ENCODE measurements at regions of chr14 and their contacts with region 1.

Region 1: GRCh38 chr14:36451301-36452065 is 68.5 kb downstream of the NKX2-1 start:
- DNase-seq: no peak
- H3K4me3 ChIP-seq: no peak overlapping the region
- H3K4me3 Mint-ChIP-seq: no peak overlapping the region
- H3K27ac Mint-ChIP-seq: no peak overlapping the region
- H3K4me1 ChIP-seq: peaks cover 3% of the 10 kb centered on the region; the same call in 1 of the 2 replicates
- H3K4me1 Mint-ChIP-seq: peaks cover 6% of the 10 kb centered on the region
- H3K27me3 ChIP-seq: no peaks in the 10 kb centered on the region
- H3K27me3 Mint-ChIP-seq: no peaks in the 10 kb centered on the region
- CTCF ChIP-seq: no peak

Region 2: DNA sequence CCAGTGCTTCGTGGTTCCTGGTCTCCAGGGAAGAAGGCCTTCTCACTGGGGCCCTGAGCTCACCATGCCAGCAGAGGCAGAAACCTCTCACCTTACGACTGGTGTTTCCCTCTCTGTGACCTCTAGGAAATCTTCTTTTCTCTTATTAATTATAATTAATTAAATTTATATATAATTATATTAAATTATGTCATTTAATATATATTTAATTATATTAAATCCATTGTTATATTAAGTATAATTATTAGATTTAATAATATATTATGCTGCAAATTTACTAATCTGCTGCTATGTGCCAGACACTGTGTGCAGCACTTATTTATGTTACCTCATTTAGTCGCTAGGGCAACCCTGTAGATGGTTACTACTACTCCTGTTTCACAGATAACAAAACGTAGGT is 60.8 kb before region 1 on chr14:
- CTCF ChIA-PET with region 1: no interaction called
- POLR2A ChIA-PET with region 1: interaction called, 11 read pairs
- intact Hi-C with region 1: no loop called
- DNase-seq: no peak
- H3K4me3 ChIP-seq: no peak overlapping the region
- H3K4me3 Mint-ChIP-seq: no peak overlapping the region
- H3K27ac Mint-ChIP-seq: no peak overlapping the region
- H3K4me1 ChIP-seq: no peaks in the 10 kb centered on the region
- H3K4me1 Mint-ChIP-seq: peaks cover 7% of the 10 kb centered on the region
- H3K27me3 ChIP-seq: no peaks in the 10 kb centered on the region
- H3K27me3 Mint-ChIP-seq: no peaks in the 10 kb centered on the region
- CTCF ChIP-seq: no peak

Region 3: DNA sequence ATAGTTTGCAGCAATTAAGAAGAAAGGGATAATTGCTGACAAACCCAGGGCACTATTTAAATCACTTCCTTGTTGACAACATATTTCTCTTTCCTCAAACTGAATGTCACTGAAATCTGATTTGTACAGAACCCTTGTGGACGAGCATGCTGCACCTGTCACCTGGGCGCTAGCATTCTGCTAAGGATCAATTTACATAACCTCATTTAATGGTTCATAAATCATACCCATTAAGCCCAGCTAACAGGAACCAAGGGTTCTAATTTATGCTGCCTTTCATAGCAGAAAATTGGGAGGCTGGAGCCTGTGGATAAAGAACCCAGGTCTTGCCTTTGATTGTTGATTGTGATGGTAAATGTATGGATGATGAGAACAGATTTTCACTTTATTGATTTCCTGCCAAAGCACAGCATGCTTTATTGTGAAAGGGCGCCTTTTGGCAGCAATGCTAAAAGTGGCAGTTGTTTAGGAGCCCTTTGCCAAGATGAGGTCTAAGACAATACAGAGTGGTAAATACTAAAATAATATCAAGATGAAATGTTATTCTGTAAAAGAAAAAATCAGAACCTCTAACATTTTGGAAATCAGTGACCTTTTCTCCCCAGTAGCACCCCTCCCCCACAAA is 26.9 kb before region 1 on chr14:
- CTCF ChIA-PET with region 1: no interaction called
- POLR2A ChIA-PET with region 1: no interaction called
- intact Hi-C with region 1: no loop called
- DNase-seq: no peak
- H3K4me3 ChIP-seq: no peak overlapping the region
- H3K4me3 Mint-ChIP-seq: no peak overlapping the region
- H3K27ac Mint-ChIP-seq: no peak overlapping the region
- H3K4me1 ChIP-seq: no peaks in the 10 kb centered on the region
- H3K4me1 Mint-ChIP-seq: peaks cover 9% of the 10 kb centered on the region
- H3K27me3 ChIP-seq: no peaks in the 10 kb centered on the region
- H3K27me3 Mint-ChIP-seq: no peaks in the 10 kb centered on the region
- CTCF ChIP-seq: no peak

Region 4: GRCh38 chr14:36510078-36510799 is 58.8 kb after region 1 on chr14:
- CTCF ChIA-PET with region 1: no interaction called
- POLR2A ChIA-PET with region 1: no interaction called
- intact Hi-C with region 1: loop called (anchors 5 kb)
- DNase-seq: no peak
- H3K4me3 ChIP-seq: no peak overlapping the region
- H3K4me3 Mint-ChIP-seq: no peak overlapping the region
- H3K27ac Mint-ChIP-seq: no peak overlapping the region
- H3K4me1 ChIP-seq: peaks cover 13% of the 10 kb centered on the region
- H3K4me1 Mint-ChIP-seq: no peaks in the 10 kb centered on the region
- H3K27me3 ChIP-seq: no peaks in the 10 kb centered on the region
- H3K27me3 Mint-ChIP-seq: peaks cover 11% of the 10 kb centered on the region
- CTCF ChIP-seq: no peak

Region 5: DNA sequence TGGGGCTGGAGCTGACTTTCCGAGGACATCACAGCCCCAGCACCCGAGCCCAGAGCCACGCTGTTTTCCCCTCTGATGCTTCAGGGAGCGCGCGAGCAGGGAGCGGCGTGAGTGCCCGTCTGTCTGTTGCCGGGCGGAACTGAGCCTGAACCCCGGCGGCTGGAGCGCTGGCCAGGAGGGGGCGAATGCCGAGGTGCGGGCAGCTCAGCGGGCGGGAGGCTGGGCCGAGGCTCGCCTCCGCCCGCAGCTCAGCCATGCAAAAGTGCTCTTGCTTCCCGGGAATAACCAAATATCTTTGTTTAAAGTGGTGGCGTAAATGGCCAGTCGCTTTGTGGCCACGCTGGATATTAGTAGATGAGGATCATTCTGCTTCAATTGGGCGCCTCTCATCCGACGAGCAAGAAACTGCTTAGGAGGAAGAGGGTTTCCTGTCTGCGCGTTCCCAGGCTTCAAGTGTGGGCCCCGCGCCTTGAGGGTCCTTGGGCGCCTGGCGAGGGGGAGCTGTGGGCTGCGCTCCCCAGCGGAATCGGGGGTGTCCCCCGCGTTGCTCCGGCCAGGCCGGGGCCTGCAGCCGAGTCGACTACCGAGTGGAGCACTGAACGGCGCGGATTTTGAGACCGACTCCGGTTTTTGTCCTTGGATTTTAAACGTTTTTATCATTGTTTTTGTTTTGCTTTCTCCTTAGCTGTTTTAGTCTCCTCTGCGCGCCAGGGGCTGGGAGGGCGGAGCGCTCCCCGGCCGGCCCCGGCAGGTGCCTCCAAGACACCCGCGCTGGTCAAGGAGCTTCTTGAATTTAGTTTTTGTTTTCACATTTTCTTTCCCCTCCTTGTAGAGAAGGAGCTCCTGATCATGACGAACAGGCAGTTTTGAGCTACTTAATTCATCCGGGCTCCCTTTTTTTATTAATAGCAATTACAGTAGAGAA is 69.4 kb after region 1 on chr14:
- CTCF ChIA-PET with region 1: interaction called, 9 read pairs
- POLR2A ChIA-PET with region 1: no interaction called
- intact Hi-C with region 1: loop called (anchors 1 kb)
- DNase-seq: peak; percentile 73 to 81
- H3K4me3 ChIP-seq: peak overlapping the region; percentile 41
- H3K4me3 Mint-ChIP-seq: peak overlapping the region; percentile 76
- H3K27ac Mint-ChIP-seq: no peak overlapping the region
- H3K4me1 ChIP-seq: peaks cover 3% of the 10 kb centered on the region; the same call in 1 of the 2 replicates
- H3K4me1 Mint-ChIP-seq: no peaks in the 10 kb centered on the region
- H3K27me3 ChIP-seq: no peaks in the 10 kb centered on the region; the same call in 1 of the 2 replicates
- H3K27me3 Mint-ChIP-seq: peaks cover 5% of the 10 kb centered on the region
- CTCF ChIP-seq: peak in 1 of 2 experiments; percentile 77

Region 6: GRCh38 chr14:36604757-36605505 is 153.4 kb after region 1 on chr14:
- CTCF ChIA-PET with region 1: interaction called, 4 read pairs
- POLR2A ChIA-PET with region 1: no interaction called
- intact Hi-C with region 1: loop called (anchors 1 kb)
- DNase-seq: peak; percentile 69 to 80
- H3K4me3 ChIP-seq: no peak overlapping the region
- H3K4me3 Mint-ChIP-seq: no peak overlapping the region
- H3K27ac Mint-ChIP-seq: no peak overlapping the region
- H3K4me1 ChIP-seq: no peaks in the 10 kb centered on the region
- H3K4me1 Mint-ChIP-seq: peaks cover 8% of the 10 kb centered on the region
- H3K27me3 ChIP-seq: no peaks in the 10 kb centered on the region
- H3K27me3 Mint-ChIP-seq: no peaks in the 10 kb centered on the region
- CTCF ChIP-seq: peak; percentile 71 to 84

Measured in Caco-2 (cell line).